PC-9 (cell line): ENCODE measurements at regions of chr2 and their contacts with region 1.

Region 1: DNA sequence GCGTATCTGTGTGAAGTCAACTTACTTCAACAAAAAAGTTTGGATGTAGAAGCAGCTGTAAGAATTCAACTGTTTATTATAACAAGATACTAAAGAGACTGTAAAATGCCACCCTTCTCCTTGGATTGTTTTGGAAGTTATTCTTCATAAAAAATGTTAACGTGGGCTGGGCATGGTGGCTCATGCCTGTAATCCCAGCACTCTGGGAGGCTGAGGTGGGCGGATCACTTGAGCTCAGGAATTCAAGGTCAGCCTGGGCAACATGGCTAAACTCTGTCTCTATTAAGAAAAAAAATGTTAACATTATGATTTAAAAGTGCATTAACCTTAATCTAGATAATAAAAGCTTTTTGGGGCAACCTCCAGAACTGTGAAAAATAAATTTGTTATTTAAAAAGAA is 7.7 kb downstream of the CIAO1 start:
- DNase-seq: no peak
- H3K4me3 ChIP-seq: no peak overlapping the region
- H3K27ac ChIP-seq: peak overlapping the region; percentile 20; the same call in 1 of the 2 replicates
- H3K4me1 ChIP-seq: no peaks in the 10 kb centered on the region
- H3K27me3 ChIP-seq: no peaks in the 10 kb centered on the region
- CTCF ChIP-seq: no peak

Region 2: DNA sequence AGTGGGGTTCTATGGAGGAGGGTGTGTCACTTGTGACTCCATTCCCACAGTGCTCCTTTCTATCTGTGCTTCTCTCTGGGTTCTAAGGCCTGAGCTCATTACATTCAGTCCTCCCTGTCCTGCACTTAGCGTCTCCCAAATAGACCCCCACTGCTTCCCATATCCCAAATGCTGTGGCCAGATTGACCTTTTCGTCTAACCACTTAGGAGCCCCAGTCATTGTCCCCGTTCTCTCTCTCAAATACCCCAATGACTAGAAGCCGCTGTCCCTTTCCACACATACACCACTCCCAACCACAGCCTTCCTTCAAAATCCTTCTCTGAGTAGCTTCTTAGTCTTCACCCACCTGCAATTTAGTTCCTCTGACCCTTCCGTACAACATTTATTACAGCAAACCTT is 535.5 kb before region 1 on chr2:
- CTCF ChIA-PET with region 1: interaction called, 10 read pairs
- POLR2A ChIA-PET with region 1: no interaction called
- intact Hi-C with region 1: no loop called
- DNase-seq: no peak
- H3K4me3 ChIP-seq: no peak overlapping the region
- H3K27ac ChIP-seq: no peak overlapping the region
- H3K4me1 ChIP-seq: no peaks in the 10 kb centered on the region
- H3K27me3 ChIP-seq: peaks cover 9% of the 10 kb centered on the region
- CTCF ChIP-seq: no peak

Region 3: DNA sequence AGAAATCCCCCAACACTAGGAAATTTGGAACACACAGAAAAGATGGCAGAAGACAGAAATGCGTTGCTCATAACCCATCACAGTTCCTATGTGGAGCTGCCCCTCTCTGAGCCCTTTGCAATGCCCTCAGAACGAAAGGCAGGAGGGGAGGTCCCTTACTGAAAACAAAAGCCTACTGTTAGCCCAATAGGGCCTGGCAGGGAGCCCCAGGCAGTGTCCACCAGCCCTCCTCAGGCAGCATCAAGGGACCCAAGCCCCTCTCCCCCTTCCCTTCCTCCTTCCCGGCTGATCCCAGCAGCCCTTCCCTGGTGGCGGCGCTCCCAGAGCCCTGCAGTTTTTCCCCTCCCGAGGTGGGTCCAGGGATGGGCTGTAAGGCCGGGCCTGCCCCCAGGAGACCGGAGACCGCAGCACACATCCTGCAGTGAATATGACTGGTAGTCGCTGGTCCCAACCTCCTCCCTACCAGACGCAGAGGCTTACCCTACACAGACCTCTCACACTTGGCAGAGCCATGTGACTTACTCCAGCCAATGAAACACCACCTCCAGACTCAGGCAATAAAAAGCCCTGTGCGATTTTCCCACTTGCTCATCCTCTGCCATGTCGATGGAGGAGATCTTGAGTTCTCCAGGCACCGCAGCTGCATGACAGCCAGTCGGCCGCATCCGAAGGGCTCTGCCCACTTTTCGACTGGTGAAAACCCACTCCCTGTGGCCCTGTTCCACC is 109.1 kb before region 1 on chr2:
- CTCF ChIA-PET with region 1: no interaction called
- POLR2A ChIA-PET with region 1: no interaction called
- intact Hi-C with region 1: no loop called
- DNase-seq: no peak
- H3K4me3 ChIP-seq: no peak overlapping the region
- H3K27ac ChIP-seq: no peak overlapping the region
- H3K4me1 ChIP-seq: no peaks in the 10 kb centered on the region
- H3K27me3 ChIP-seq: peaks cover 2% of the 10 kb centered on the region; the same call in 1 of the 2 replicates
- CTCF ChIP-seq: no peak

Region 4: DNA sequence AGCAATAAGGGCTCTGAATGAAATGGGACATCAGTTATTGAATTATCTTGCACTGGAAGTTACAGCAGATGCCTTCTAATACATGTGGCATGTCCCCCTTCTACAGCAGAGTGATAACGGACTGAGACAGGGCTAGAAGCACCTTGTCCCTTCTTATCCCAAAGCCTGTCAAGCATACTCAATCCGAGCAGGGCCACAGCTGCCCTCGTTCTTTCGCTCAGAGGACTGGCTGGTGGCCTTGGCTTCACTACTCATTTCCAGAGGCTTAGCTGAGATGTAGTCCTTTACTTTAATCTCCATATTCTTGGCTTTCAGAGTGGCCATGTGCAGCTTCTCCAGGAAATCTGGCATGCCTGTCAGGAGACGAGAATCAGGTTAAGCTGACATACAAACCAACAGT is 87.2 kb before region 1 on chr2:
- CTCF ChIA-PET with region 1: no interaction called
- POLR2A ChIA-PET with region 1: interaction called, 13 read pairs
- intact Hi-C with region 1: no loop called
- DNase-seq: no peak
- H3K4me3 ChIP-seq: no peak overlapping the region
- H3K27ac ChIP-seq: no peak overlapping the region
- H3K4me1 ChIP-seq: no peaks in the 10 kb centered on the region
- H3K27me3 ChIP-seq: no peaks in the 10 kb centered on the region
- CTCF ChIP-seq: no peak